IMR-90 (cell line): ENCODE measurements at regions of chr16 and their contacts with region 1.

Region 1: GRCh38 chr16:27611340-27611739 is 61.4 kb downstream of the KATNIP start:
- DNase-seq: no peak
- ATAC-seq: no peak
- H3K4me3 ChIP-seq: no peak overlapping the region
- H3K27ac ChIP-seq: no peak overlapping the region
- H3K4me1 ChIP-seq: no peaks in the 10 kb centered on the region
- H3K27me3 ChIP-seq: no peaks in the 10 kb centered on the region
- CTCF ChIP-seq: no peak
- POLR2A ChIP-seq: no peak
- RAD21 ChIP-seq: no peak

Region 2: GRCh38 chr16:27566417-27566816 is 44.9 kb before region 1 on chr16:
- CTCF ChIA-PET with region 1: interaction called, 10 read pairs
- POLR2A ChIA-PET with region 1: no interaction called
- dilution Hi-C with region 1: no loop called
- in situ Hi-C with region 1: no loop called
- intact Hi-C with region 1: no loop called
- DNase-seq: no peak
- ATAC-seq: no peak
- H3K4me3 ChIP-seq: no peak overlapping the region
- H3K27ac ChIP-seq: no peak overlapping the region
- H3K4me1 ChIP-seq: no peaks in the 10 kb centered on the region; the same call in 1 of the 2 replicates
- H3K27me3 ChIP-seq: no peaks in the 10 kb centered on the region
- CTCF ChIP-seq: no peak
- POLR2A ChIP-seq: no peak
- RAD21 ChIP-seq: no peak

Region 3: GRCh38 chr16:27579087-27579980 is 32.0 kb before region 1 on chr16:
- CTCF ChIA-PET with region 1: no interaction called
- POLR2A ChIA-PET with region 1: no interaction called
- dilution Hi-C with region 1: no loop called
- in situ Hi-C with region 1: no loop called
- intact Hi-C with region 1: no loop called
- DNase-seq: peak; percentile 22
- ATAC-seq: peak; percentile 47
- H3K4me3 ChIP-seq: no peak overlapping the region
- H3K27ac ChIP-seq: peak overlapping the region; percentile 57
- H3K4me1 ChIP-seq: peaks cover 11% of the 10 kb centered on the region
- H3K27me3 ChIP-seq: no peaks in the 10 kb centered on the region
- CTCF ChIP-seq: no peak
- POLR2A ChIP-seq: no peak
- RAD21 ChIP-seq: no peak